ENCODE measurements at regions of chr12 and their contacts with region 1.

Region 1: DNA sequence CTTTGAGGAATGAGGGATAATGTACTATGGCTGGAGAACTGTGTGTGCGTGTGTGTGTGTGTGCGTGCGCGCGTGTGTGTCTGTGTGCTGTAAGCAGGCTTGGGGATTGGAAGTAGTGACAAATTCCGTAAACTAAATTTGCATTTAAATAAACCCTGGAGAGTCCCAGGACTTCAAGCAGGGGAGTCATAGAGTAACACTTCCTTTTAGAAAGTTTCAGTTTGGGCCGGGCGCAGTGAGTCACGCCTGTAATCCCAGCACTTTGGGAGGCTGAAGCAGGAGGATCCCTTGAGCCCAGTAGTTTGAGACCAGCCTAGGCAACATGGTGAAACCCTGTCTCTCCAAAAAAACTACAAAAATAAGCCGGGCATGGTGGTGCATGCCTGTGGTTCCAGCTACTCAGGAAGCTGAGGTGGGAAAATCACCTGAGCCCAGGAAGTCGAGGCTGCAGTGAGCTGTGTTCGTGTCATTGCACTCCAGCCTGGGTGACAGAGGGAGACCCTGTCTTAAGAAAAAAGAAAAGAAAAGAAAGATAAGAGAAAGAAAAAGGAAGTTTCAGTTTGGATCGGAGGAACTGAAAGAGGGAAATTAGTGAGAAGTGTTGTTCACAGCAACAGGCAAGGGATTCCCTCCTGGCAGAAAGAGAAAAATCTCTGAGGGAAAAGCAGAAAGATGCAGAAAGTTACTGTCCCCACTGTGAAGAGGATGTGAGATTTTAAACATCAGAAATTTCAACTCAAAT is 222.7 kb upstream of the SOX5 start:
- DNase-seq: peak; percentile 71
- ATAC-seq: peak; percentile 83
- H3K4me3 ChIP-seq: 0 out of 2 replicates have a peak overlapping the region, but pooled peaks have one; percentile 24
- H3K27ac ChIP-seq: peak overlapping the region; percentile 11
- H3K4me1 ChIP-seq: peaks cover 20% of the 10 kb centered on the region
- H3K27me3 ChIP-seq: no peaks in the 10 kb centered on the region
- CTCF ChIP-seq: no peak
- EP300 ChIP-seq: peak; percentile 73 to 81; a peak in 2 of 4 replicates
- POLR2A ChIP-seq: no peak
- RAD21 ChIP-seq: no peak

Region 2: DNA sequence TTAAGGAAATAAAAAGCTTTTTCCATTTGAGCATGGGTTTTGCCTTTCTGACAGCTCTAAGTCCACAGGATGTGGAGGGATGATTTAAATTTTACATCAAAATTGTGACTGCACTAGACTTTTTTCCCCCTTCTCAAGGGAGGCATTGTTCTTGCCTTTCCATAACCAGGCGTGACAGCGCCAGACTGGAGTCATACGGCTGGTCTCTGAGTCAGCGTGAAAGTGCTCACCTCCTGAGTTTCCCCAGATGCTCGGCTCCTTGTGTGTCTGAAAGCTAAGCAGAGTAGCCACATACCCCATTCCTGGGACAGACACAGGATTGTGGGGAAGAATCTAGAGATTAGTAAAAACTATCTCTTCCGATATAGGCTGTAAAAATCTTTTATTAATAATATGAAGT is 265.9 kb before region 1 on chr12:
- CTCF ChIA-PET with region 1: no interaction called
- POLR2A ChIA-PET with region 1: no interaction called
- RAD21 ChIA-PET with region 1: no interaction called
- SMC1A ChIA-PET with region 1: no interaction called
- in situ Hi-C with region 1: no loop called
- intact Hi-C with region 1: no loop called
- DNase-seq: no peak
- ATAC-seq: peak; percentile 83
- H3K4me3 ChIP-seq: no peak overlapping the region
- H3K27ac ChIP-seq: no peak overlapping the region
- H3K4me1 ChIP-seq: no peaks in the 10 kb centered on the region
- H3K27me3 ChIP-seq: no peaks in the 10 kb centered on the region
- CTCF ChIP-seq: no peak
- EP300 ChIP-seq: peak in 1 of 2 experiments; percentile 68; a peak in 2 of 4 replicates
- POLR2A ChIP-seq: no peak
- RAD21 ChIP-seq: no peak

Region 3: GRCh38 chr12:24127919-24128721 is 44.1 kb before region 1 on chr12:
- CTCF ChIA-PET with region 1: no interaction called
- POLR2A ChIA-PET with region 1: interaction called, 3 read pairs
- RAD21 ChIA-PET with region 1: interaction called, 3 read pairs
- SMC1A ChIA-PET with region 1: interaction called, 3 read pairs
- in situ Hi-C with region 1: no loop called
- intact Hi-C with region 1: loop called (anchors 1 kb)
- DNase-seq: peak; percentile 63
- ATAC-seq: peak; percentile 96
- H3K4me3 ChIP-seq: no peak overlapping the region; the same call in 1 of the 2 replicates
- H3K27ac ChIP-seq: no peak overlapping the region
- H3K4me1 ChIP-seq: peaks cover 8% of the 10 kb centered on the region
- H3K27me3 ChIP-seq: 0 out of 4 replicates have a peak, but pooled peaks cover 0 to 2% of the 10 kb centered on the region in 2 experiments
- CTCF ChIP-seq: no peak
- EP300 ChIP-seq: peak; percentile 50 to 61; a peak in 2 of 4 replicates
- POLR2A ChIP-seq: no peak
- RAD21 ChIP-seq: no peak

Region 4: DNA sequence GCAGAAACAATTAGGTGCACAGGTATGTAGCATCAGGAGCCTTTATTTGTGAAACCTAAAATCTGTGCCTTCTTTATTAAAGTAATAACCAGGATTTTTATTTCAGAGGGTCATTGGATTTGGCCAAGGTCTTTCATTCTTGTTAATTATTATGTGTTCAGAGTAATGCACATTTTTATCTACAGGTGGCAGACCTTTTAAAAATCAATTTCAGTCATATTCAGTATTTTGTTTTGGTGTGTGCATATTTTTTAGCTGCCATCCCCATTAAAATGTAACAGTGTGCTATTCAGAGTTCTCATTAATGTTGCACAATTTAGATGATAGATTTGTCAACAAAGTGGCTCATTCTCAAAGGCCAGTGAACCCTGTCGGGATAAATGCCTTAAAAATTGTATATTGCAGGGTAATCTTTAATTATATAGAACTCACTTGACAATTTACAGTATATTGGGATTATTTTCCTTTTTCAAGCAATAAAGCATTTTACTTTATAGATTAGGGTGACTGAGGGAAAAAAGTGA is 96.5 kb after region 1 on chr12:
- CTCF ChIA-PET with region 1: no interaction called
- POLR2A ChIA-PET with region 1: no interaction called
- RAD21 ChIA-PET with region 1: no interaction called
- SMC1A ChIA-PET with region 1: no interaction called
- in situ Hi-C with region 1: no loop called
- intact Hi-C with region 1: no loop called
- DNase-seq: no peak
- ATAC-seq: no peak
- H3K4me3 ChIP-seq: no peak overlapping the region
- H3K27ac ChIP-seq: no peak overlapping the region
- H3K4me1 ChIP-seq: no peaks in the 10 kb centered on the region
- H3K27me3 ChIP-seq: no peaks in the 10 kb centered on the region
- CTCF ChIP-seq: no peak
- EP300 ChIP-seq: no peak
- POLR2A ChIP-seq: no peak
- RAD21 ChIP-seq: no peak

Region 5: DNA sequence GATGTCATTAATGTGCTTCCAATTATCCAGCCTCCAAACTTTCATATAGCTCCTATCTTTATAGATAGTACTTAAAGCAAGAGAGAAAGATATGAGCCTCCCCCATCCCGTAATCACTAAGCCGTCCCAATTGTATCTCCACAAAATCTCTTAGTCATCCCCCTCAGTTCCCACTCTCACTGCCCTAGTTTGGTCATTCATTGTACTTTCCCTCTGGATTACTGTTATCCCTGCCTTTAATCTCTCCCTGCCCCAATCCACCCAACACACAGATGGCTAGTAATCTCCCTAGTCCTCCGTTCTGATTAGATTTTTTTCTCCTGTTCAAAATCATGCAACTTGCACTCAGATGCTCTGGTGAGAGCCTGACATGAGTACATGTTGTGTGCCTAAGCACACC is 782.1 kb after region 1 on chr12:
- CTCF ChIA-PET with region 1: no interaction called
- POLR2A ChIA-PET with region 1: no interaction called
- RAD21 ChIA-PET with region 1: no interaction called
- SMC1A ChIA-PET with region 1: no interaction called
- in situ Hi-C with region 1: no loop called
- intact Hi-C with region 1: loop called (anchors 2 kb)
- DNase-seq: no peak
- ATAC-seq: no peak
- H3K4me3 ChIP-seq: no peak overlapping the region
- H3K27ac ChIP-seq: peak overlapping the region; percentile 64
- H3K4me1 ChIP-seq: peaks cover 49% of the 10 kb centered on the region
- H3K27me3 ChIP-seq: no peaks in the 10 kb centered on the region
- CTCF ChIP-seq: no peak
- EP300 ChIP-seq: no peak
- POLR2A ChIP-seq: no peak
- RAD21 ChIP-seq: no peak

Measured in GM12878 (cell line).